Breast epithelium (tissue), 4 donors: ENCODE measurements at regions of chr1 and their contacts with region 1.

Region 1: DNA sequence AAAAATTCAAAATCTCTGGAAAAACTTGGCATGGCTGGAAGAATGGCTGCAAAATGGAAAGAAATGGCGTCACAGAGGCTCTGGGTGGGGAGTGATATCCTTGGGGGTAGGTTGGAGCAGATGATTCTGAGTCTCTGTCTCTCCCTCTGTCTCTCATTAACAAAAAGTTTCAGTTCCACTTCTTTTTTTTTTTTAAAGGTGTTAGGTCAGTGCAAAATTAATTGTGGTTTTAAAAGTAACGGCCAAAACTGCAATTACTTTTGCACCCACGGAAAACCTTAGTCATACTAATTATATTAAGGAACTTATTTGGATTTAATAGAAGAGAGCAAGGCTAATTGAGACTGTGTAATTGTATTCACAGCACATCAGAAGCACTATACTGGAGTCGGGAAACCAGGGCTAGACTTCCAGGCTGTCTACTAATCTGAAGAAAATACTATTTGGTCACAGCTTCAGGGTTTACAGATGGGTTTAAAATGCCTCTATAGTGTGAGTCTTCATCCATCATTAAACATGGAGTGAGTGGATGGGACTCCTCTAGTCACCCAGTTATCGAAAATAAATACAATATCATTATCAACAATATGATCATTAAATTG is 289.1 kb upstream of the PLD5 start:
- DNase-seq: no peak
- H3K4me3 ChIP-seq: no peak overlapping the region
- H3K27ac ChIP-seq: no peak overlapping the region
- H3K4me1 ChIP-seq: no peaks in the 10 kb centered on the region
- H3K27me3 ChIP-seq: no peaks in the 10 kb centered on the region
- CTCF ChIP-seq: no peak
- POLR2A ChIP-seq: no peak

Region 2: GRCh38 chr1:241828463-241829021 is 985.0 kb before region 1 on chr1:
- intact Hi-C with region 1: loop called (anchors 10 kb)
- DNase-seq: no peak
- H3K4me3 ChIP-seq: no peak overlapping the region
- H3K27ac ChIP-seq: no peak overlapping the region
- H3K4me1 ChIP-seq: no peaks in the 10 kb centered on the region
- H3K27me3 ChIP-seq: no peaks in the 10 kb centered on the region
- CTCF ChIP-seq: no peak
- POLR2A ChIP-seq: no peak

Region 3: GRCh38 chr1:243409284-243409683 is 595.7 kb after region 1 on chr1:
- intact Hi-C with region 1: no loop called
- DNase-seq: no peak
- H3K4me3 ChIP-seq: no peak overlapping the region
- H3K27ac ChIP-seq: no peak overlapping the region
- H3K4me1 ChIP-seq: no peaks in the 10 kb centered on the region
- H3K27me3 ChIP-seq: no peaks in the 10 kb centered on the region
- CTCF ChIP-seq: no peak
- POLR2A ChIP-seq: no peak